Esophagus muscularis mucosa (tissue), 4 donors: ENCODE measurements at regions of chr2 and their contacts with region 1.

Region 1: DNA sequence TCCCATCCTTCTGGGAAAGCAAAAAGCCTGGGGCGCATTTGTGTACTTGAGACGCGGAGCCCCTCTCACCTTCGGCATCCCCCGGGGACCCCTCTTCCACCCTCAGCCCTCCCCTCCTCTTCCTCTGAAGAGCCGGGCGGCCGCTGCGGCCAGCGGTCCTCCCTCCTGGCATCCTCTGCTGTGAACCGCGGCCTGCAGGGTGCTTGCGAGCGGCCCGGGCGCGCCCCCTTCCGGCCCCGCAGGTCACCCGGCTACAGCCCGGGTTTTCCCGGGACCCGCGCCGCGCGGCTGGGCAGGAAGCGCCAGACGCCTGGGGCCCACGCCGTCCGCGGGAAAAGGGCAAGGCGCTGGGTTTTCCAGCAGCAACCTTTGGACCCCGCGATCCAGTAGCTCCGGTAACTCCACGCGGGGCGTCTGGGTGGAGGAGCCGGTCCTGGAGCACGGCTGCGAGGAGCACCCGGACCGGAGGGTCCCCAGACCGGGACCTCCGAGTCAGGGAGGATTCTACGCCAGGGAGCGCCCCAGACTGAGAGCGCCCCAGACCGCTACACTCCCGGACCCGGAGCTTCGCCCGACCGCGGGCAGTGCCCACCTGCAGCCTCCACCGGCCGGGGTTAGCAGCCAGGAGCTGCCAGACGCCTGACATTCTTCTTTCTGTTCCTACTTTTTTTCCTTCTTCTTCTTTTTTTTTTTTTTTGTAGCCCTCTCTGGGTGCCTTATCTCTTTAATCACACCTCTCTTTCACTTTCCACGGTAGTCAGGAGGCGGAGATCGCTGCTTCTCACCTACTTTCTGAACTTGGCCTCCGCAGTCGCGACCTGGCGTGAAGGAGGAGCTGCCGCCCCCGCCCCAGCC is at the start of gene IL18R1:
- DNase-seq: no peak
- H3K4me3 ChIP-seq: peak within 1 kb of the TSS; percentile 60 to 69 (median 67)
- H3K27ac ChIP-seq: peak within 1 kb of the TSS; percentile 51 to 67 (median 60)
- H3K4me1 ChIP-seq: peaks cover 5 to 16% (median 13%) of the 10 kb centered on the region in 4 donors
- H3K27me3 ChIP-seq: peaks cover 0 to 10% (median 0%) of the 10 kb centered on the region in 4 donors
- CTCF ChIP-seq: peak; percentile 58 to 81 (median 67)
- EP300 ChIP-seq: no peak
- POLR2A ChIP-seq: no peak
- total RNA-seq, gene IL18R1: 2.8 to 11.8 (median 5.2) TPM

Region 2: DNA sequence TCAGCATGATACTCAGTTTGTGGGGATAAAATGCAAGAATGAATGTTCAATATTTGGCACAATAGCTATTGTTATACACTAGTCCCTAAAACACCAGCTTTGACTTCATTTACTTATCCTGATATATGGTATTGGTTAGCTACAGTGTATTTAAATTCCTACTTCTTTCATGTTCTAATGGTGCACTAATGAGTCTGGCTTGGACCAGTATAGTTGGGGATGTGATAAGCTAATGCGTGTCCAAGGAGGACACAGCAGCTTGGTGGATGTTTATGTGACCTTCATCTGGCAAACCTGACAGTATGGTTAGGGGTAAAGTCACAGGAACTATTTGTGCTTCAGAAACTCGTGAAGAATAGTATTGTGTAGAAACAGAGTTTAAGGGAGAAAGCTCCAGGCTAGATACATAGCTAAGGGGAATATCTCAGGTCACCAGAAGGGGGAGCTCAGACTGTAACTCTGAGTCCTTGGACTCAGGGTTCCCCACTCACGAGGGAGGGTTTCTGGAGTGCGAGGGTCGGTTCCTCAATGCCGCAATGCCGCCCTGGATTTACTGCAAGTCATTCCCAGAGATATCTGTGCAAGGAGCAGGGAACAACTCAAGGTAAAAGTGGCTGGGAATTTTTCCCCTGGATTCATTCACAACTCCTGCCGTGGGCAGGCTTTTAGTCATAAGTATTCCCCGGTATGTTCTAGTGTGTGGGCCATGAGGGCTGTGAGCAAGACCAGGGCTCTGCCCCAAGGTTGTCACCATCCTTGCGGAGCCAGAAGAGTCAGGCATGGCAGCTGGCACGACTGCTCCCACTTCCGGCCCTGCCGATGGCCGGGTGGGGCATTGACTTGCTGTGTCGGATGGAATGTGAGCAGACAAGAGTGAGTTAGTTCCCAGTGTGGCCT is 349.5 kb before region 1 on chr2:
- intact Hi-C with region 1: loop called (anchors 10 kb)
- DNase-seq: no peak
- H3K4me3 ChIP-seq: no peak overlapping the region
- H3K27ac ChIP-seq: no peak overlapping the region
- H3K4me1 ChIP-seq: peaks cover 5 to 12% (median 8%) of the 10 kb centered on the region in 4 donors
- H3K27me3 ChIP-seq: no peaks in the 10 kb centered on the region
- CTCF ChIP-seq: peak; percentile 39 to 63 (median 46)
- EP300 ChIP-seq: no peak
- POLR2A ChIP-seq: no peak

Region 3: DNA sequence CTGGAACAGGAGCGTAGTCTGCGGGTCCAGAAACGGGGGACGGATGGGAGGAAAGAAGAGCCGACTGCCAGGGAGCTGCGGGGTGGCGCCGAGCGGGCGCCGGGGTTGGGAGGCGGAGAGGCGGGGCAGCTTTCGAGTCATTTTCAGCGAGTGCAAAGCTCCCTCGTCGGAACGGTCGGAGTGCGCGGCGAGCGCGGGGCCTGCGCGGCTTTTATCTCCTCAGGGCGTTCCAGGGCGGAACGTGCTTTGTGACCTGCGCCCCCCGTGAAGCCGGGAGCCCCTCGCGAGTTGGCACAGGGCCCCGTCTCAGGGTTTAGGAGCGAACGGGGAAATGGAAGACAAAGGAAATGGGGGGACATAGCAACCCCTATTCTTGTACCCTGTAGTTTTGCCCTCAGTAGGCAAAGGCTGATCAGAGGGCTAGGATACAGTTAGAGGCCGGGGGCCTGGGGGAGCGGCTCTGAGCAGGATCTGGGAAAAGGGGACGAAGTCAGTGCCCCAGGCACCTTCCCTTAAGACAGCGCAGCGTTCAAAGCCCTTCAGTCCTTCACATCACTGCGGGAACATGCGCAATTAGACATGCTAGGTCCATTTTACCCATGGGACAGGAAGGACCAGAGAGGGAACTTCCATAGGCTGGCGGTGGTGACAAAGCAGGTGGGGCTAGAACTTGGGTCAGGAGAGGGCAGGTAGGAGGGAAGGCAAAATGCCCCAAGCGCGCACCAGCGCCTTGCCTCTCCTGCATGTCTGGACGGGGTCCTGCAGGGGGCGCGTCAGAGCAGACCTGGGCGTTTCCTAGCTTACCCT is 104.5 kb before region 1 on chr2:
- intact Hi-C with region 1: loop called (anchors 10 kb)
- DNase-seq: no peak
- H3K4me3 ChIP-seq: peak overlapping the region; percentile 43 to 55 (median 50)
- H3K27ac ChIP-seq: peak overlapping the region in 1 of 4 donors; percentile 34
- H3K4me1 ChIP-seq: peaks cover 6 to 14% (median 12%) of the 10 kb centered on the region in 4 donors
- H3K27me3 ChIP-seq: peaks cover 0 to 19% (median 0%) of the 10 kb centered on the region in 4 donors
- CTCF ChIP-seq: peak; percentile 38 to 68 (median 51)
- EP300 ChIP-seq: no peak
- POLR2A ChIP-seq: no peak

Region 4: GRCh38 chr2:102317715-102318114 is 38.0 kb before region 1 on chr2:
- intact Hi-C with region 1: no loop called
- DNase-seq: no peak
- H3K4me3 ChIP-seq: no peak overlapping the region
- H3K27ac ChIP-seq: no peak overlapping the region
- H3K4me1 ChIP-seq: no peaks in the 10 kb centered on the region
- H3K27me3 ChIP-seq: no peaks in the 10 kb centered on the region
- CTCF ChIP-seq: no peak
- EP300 ChIP-seq: no peak
- POLR2A ChIP-seq: no peak